Left cardiac atrium (tissue), 4 donors: ENCODE measurements at regions of chr1 and their contacts with region 1.

Region 1: GRCh38 chr1:110209715-110210603 is at the start of gene KCNC4:
- DNase-seq: peak; percentile 93
- ATAC-seq: peak; percentile 91 to 94
- total RNA-seq, gene KCNC4: 8.7 to 8.8 TPM

Region 2: GRCh38 chr1:110312188-110313121 is 102.5 kb after region 1 on chr1:
- intact Hi-C with region 1: loop called (anchors 1 to 2 kb)
- DNase-seq: peak; percentile 86
- ATAC-seq: peak; percentile 85 to 95

Region 3: DNA sequence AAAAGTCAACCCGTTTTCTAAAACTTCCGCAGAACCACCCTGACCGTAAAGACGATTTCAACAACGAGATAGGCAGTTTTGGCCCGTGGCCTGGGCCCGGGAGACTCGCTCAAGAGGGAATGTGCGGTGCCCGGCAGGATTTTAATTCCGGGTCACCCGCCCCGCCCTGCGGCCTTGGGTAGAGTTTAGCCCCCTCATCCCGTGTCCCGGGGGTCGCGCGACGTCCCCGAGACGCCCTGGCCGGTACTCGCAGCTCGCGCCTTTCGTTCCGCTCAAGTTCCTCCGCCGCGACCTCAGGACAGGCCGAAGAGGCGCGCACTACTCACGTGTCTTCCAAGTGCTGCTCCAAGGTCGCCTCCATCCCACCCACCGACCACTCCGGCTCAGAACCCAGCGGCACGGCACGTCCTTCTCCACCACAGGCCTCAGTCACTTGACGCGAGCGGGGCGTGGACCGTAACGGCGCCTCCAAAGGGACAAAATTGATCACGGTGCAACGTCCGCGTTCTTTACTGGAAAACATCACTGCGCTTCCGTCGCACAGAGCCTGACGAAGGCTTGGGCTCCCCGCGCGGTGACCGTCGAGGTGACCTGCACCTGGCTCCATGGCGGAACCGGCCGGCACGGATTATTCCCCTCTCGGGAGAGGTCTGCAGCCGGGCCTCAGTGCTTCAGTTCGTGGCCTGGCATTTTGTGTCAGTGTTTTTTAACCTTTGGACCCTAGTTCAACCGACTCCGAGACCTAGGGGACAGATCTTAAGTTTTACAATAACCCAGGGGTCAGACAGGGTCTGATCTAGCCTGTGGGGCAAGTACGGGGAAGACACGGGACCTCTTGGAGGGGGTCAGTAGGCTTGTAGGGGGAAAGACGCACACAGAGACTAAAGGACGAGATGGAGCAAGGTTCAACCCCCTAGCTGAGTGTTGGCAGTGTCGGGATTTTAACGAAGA is 197.6 kb after region 1 on chr1 and contains the start of gene LAMTOR5:
- intact Hi-C with region 1: loop called in 1 of 2 experiments (anchors 5 kb)
- DNase-seq: peak; percentile 94
- ATAC-seq: peak; percentile 96 to 97
- total RNA-seq, gene LAMTOR5: 191 to 197 TPM

Region 4: DNA sequence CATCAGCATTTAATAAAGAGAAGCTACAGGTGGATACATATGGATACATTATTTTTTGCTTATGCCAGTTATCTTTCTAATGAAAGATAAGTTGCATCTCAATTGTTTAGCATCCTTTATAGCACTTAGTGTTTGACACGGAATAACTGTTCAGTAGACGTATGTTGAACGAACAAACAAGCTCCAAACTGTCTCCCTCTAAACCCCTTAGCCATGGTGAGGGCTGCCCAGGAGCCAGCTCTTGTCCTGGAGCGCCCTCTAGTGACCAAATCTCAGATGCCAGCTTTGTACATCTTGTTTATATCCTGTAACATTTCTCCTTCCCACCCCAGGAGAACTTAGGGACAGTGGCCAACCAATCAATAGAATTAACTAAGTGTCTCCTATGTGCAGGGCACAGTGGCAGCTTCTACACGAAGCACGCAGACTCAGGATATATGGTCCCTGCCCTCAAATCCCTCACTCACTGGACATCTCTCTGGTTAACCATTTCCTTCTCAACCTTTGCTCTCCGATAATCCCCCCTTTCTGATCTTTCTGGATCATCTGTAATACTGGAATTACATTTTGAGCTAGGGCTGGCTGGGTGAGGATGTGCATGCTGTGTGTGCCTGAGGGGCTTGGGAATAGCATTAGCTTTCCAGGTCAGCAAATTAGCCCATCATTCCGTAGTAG is 286.1 kb after region 1 on chr1:
- intact Hi-C with region 1: loop called in 1 of 2 experiments (anchors 10 kb)
- DNase-seq: peak; percentile 83
- ATAC-seq: peak; percentile 81 to 89